ENCODE measurements at regions of chr12 and their contacts with region 1.

Region 1: GRCh38 chr12:64801381-64801780 is 23.1 kb upstream of the TBC1D30 start:
- H3K4me3 Mint-ChIP-seq: no peak overlapping the region
- H3K27ac Mint-ChIP-seq: peak overlapping the region; percentile 5
- H3K4me1 Mint-ChIP-seq: peaks cover 25% of the 10 kb centered on the region
- H3K27me3 Mint-ChIP-seq: peaks cover 18% of the 10 kb centered on the region

Region 2: DNA sequence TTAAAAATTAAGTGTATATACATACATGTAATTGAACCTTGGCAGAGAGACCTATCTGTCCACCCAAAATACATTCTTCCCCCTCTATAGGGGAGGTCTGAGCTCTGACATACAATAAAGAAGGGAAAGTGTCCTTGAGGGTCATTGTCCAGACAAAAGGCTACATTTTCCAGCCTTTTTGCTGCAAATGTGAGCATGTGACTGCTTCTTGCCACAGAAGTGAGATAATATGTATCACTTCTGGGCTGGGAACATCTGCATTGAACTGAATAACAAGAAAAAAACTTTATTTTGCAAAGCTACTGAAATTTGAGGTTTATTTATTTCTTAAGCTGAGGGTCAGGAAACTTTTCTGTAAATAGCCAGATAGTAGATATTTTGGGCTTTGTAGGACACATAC is 154.4 kb after region 1 on chr12:
- intact Hi-C with region 1: no loop called
- H3K4me3 Mint-ChIP-seq: no peak overlapping the region
- H3K27ac Mint-ChIP-seq: no peak overlapping the region
- H3K4me1 Mint-ChIP-seq: no peaks in the 10 kb centered on the region
- H3K27me3 Mint-ChIP-seq: peaks cover 13% of the 10 kb centered on the region

Region 3: DNA sequence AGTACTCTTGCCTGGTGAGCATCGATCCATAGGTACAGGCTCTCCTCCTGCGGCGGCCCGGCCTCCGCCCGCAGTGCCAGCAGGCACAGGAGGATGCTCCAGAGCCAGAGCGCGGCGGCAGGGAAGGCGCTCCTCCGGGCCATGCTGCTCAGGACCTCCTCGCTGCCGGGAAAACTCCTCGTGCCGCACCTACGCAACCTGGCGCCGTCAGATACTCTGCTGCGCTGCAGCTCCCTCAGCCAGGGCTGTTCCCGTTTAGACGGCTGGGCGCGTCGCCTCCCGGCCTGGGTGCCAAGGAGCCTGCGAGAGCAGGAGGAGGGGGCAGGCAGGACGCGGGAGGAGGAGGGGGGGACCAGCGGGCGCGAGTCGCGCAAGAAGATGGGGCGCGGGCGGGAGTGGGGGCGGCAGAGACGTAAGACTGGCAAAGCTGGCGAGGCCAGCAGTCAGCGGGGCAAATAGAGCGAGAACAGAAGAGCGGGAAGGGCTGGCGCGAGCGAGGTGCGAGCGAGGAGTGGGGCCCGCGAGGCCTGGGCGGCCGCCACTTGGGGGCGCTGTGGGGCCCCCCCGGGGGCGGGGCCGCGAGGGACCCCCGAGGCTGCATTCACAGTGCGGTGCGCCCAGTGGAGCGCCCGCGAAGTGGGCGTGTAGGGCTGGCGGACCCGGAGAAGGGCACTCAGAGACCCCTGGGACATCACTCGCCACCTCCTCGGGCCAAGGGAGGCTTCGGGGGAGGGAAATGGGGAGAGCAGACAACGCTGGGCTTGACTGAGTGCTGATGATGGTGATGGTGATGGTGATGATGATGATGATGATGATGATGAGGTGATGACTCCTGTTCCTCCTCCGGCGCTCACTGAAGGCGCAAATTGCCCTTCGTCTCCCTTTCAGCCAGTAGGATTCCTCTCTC is 319.9 kb after region 1 on chr12 and contains the start of gene WIF1:
- intact Hi-C with region 1: loop called (anchors 10 kb)
- H3K4me3 Mint-ChIP-seq: peak within 1 kb of the TSS; percentile 14
- H3K27ac Mint-ChIP-seq: no peak within 1 kb of the TSS
- H3K4me1 Mint-ChIP-seq: peaks cover 13% of the 10 kb centered on the region
- H3K27me3 Mint-ChIP-seq: peaks cover 41% of the 10 kb centered on the region

Measured in dendritic cell treated with granulocyte-macrophage colony-stimulating factor and Interleukin-4, amounts not matched to agents 40 ng/mL and 50 ng/mL, for 4 days (primary cell).